ENCODE measurements at regions of chr11 and their contacts with region 1.

Region 1: GRCh38 chr11:62705880-62706849 is 1.1 kb downstream of the BSCL2 start:
- DNase-seq: peak; percentile 98
- ATAC-seq: peak; percentile 72
- H3K4me3 Mint-ChIP-seq: peak overlapping the region; percentile 82
- H3K27ac Mint-ChIP-seq: peak overlapping the region; percentile 51
- H3K4me1 Mint-ChIP-seq: peaks cover 46% of the 10 kb centered on the region
- H3K27me3 Mint-ChIP-seq: no peaks in the 10 kb centered on the region

Region 2: GRCh38 chr11:61945191-61945590 is 761.0 kb before region 1 on chr11:
- CTCF ChIA-PET with region 1: no interaction called
- POLR2A ChIA-PET with region 1: no interaction called
- intact Hi-C with region 1: no loop called
- DNase-seq: no peak
- ATAC-seq: no peak
- H3K4me3 Mint-ChIP-seq: no peak overlapping the region
- H3K27ac Mint-ChIP-seq: no peak overlapping the region
- H3K4me1 Mint-ChIP-seq: peaks cover 5% of the 10 kb centered on the region
- H3K27me3 Mint-ChIP-seq: peaks cover 2% of the 10 kb centered on the region

Region 3: DNA sequence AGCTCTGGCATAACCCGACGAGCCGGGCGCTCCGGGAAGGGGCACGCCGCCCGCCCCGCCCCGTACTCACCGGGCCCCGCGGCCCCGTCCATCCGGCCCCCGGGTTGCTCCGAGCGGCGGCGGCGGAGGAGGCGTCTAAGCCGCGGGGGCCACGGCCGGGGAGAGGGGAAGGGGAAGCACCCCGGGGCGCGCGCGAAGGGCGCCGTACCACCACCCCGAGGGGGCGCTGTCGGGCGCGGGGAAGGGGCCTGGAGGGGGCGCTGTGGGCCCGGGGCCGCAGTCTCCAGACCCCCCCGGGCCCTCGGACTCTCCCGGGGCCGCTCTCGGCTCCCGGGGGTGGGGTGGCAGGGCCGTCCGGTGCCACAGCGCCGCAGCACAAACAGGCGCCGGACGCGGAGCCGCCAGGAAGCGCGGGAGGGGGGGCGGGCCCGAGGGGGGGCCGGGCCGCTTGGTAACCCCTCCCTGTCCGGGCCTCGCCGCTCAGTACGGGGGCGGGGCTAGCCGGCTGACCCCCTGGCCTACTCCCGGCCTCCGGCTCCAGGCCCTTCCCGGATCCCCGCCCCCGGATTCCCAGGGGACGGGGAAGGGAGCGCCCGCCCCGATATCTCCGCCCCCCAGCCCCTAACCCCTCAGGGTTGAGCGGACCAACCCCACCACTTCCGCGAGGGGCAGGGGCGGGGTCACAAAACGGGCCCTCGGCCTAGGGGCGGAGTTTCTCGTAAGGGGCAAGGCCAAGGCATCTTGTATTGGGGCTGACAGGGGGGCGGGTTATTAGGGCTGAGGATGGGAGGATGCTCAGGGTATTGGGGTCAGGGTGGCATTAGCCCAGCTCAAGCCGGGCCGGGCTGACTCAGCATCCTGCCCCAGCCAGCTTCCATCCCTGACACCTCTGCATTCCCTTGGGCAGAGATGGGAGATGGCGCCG is 93.5 kb before region 1 on chr11 and contains the starts of genes EML3 and ROM1:
- CTCF ChIA-PET with region 1: no interaction called
- POLR2A ChIA-PET with region 1: no interaction called
- intact Hi-C with region 1: loop called in 1 of 2 experiments (anchors 2 kb)
- DNase-seq: peak; percentile 91
- ATAC-seq: peak; percentile 78
- H3K4me3 Mint-ChIP-seq: peak within 1 kb of the TSS; percentile 91
- H3K27ac Mint-ChIP-seq: peak within 1 kb of the TSS; percentile 90
- H3K4me1 Mint-ChIP-seq: peaks cover 37% of the 10 kb centered on the region
- H3K27me3 Mint-ChIP-seq: no peaks in the 10 kb centered on the region
- total RNA-seq, gene EML3: 101 to 112 TPM
- total RNA-seq, gene ROM1: 1.5 to 1.9 TPM

Region 4: DNA sequence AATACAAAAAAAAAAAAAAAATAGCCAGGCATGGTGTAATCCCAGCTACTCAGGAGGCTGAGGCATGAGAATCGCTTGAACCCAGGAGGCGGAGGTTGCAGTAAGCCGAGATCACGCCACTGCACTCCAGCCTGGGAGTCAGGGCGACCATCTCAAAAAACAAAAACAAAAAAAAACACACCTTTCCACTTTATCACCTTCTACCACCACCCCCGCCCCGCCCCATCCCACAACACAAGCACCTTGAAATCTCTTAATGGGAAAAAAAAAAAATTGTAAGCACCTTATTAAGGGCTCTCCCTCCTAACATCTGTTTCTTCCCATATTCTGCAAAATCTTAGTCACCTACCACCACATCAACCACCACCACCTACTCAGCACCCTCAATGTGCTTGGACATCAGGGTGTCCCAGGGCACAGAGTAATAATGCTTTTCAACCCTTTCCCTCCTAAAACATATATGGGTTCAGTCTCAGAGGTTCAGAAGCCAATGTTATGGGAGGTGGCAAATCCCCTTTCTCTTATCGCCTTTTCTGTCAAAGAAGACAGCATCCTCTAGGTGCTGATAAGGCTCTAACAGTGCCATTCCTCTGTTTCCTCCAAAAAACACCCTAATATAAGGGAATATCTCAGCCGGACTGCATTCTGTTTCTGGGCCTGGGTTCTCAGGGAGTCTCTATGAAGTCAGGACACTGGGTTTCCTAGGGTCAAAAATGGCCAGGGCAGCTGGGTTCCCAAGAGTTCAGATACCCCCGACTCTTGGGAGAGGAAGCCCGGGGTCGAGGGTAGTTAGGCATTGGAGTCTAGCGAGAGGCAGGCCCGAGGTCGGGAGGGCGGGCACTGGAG is 53.8 kb before region 1 on chr11:
- CTCF ChIA-PET with region 1: interaction called, 3 read pairs
- POLR2A ChIA-PET with region 1: no interaction called
- intact Hi-C with region 1: loop called in 1 of 2 experiments (anchors 1 kb)
- DNase-seq: no peak
- ATAC-seq: no peak
- H3K4me3 Mint-ChIP-seq: peak overlapping the region; percentile 88
- H3K27ac Mint-ChIP-seq: peak overlapping the region; percentile 91
- H3K4me1 Mint-ChIP-seq: peaks cover 23% of the 10 kb centered on the region
- H3K27me3 Mint-ChIP-seq: no peaks in the 10 kb centered on the region

Region 5: GRCh38 chr11:62678770-62679696 is 27.1 kb before region 1 on chr11 and contains the start of gene UBXN1:
- CTCF ChIA-PET with region 1: interaction called, 8 read pairs
- POLR2A ChIA-PET with region 1: interaction called, 4 read pairs
- intact Hi-C with region 1: loop called (anchors 1 to 5 kb)
- DNase-seq: peak; percentile 93
- ATAC-seq: peak; percentile 88
- H3K4me3 Mint-ChIP-seq: peak within 1 kb of the TSS; percentile 82
- H3K27ac Mint-ChIP-seq: peak within 1 kb of the TSS; percentile 92
- H3K4me1 Mint-ChIP-seq: peaks cover 28% of the 10 kb centered on the region
- H3K27me3 Mint-ChIP-seq: no peaks in the 10 kb centered on the region
- total RNA-seq, gene UBXN1: 95.6 to 119 TPM

Region 6: DNA sequence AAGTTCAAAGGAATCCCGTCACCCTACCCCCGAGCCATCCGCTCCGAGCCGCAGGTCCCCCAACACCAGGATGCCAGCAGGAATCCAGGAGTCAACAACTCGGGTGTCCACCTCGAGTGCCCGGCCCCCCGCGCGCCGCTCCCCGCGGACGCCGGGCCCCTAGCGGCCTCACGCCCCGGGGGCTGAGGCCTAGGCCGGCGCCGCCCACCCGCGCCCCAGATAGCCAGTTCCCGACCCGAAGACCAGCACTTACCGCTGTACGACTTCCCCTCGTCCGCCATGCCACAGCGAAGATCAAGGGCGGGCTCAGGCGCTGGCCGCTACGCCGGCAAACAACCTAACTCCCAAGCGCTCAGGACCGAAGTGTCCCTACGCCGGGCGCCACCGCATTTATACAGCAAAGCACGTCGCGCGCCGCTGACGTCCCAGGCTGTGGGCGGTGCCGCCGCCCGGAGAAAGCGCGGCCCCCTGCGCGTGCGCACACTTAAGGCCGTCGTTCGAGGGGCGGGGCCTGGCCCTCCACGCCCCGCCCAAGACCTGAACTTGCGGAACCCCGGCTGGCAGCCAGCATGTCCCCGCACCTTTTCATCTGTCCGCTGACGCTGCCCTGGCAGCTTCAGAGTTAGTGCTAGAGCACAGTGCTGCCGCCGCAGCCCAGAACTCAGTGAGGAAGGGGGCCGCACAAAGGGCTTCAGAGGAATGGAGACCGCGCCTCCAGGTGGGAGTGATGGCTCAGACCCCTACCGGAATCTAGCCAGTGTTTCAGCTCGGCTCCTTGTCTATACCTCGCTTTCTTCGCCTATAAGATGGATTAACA is 99.1 kb after region 1 on chr11 and contains the start of gene NXF1:
- CTCF ChIA-PET with region 1: interaction called, 4 read pairs
- POLR2A ChIA-PET with region 1: no interaction called
- intact Hi-C with region 1: loop called in 1 of 2 experiments (anchors 1 kb)
- DNase-seq: peak; percentile 97
- ATAC-seq: peak; percentile 79
- H3K4me3 Mint-ChIP-seq: peak within 1 kb of the TSS; percentile 99
- H3K27ac Mint-ChIP-seq: peak within 1 kb of the TSS; percentile 97
- H3K4me1 Mint-ChIP-seq: peaks cover 29% of the 10 kb centered on the region
- H3K27me3 Mint-ChIP-seq: no peaks in the 10 kb centered on the region
- total RNA-seq, gene NXF1: 89.5 to 97.6 TPM

Region 7: DNA sequence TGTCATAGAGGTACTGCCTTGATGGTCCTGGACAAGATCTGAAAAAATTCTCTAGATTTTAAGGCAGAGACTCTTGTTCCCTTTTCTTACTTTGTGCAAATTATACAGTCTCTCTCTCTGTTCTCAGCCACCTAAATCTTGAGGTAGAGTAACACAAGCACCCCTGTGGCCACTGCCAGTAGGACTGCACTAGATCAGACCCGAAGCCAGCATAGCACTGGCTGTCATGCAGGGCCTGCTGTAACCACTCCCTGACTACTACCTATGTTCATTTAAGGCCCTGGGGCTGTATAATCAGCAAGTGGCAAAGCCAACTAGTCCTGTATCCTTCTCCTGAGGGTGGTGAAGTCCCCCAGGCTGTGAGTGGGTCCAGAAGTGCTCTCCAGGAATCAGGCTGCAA is 449.6 kb after region 1 on chr11:
- CTCF ChIA-PET with region 1: no interaction called
- POLR2A ChIA-PET with region 1: no interaction called
- intact Hi-C with region 1: no loop called
- DNase-seq: no peak
- ATAC-seq: no peak
- H3K4me3 Mint-ChIP-seq: no peak overlapping the region
- H3K27ac Mint-ChIP-seq: no peak overlapping the region
- H3K4me1 Mint-ChIP-seq: no peaks in the 10 kb centered on the region
- H3K27me3 Mint-ChIP-seq: peaks cover 29% of the 10 kb centered on the region

Region 8: DNA sequence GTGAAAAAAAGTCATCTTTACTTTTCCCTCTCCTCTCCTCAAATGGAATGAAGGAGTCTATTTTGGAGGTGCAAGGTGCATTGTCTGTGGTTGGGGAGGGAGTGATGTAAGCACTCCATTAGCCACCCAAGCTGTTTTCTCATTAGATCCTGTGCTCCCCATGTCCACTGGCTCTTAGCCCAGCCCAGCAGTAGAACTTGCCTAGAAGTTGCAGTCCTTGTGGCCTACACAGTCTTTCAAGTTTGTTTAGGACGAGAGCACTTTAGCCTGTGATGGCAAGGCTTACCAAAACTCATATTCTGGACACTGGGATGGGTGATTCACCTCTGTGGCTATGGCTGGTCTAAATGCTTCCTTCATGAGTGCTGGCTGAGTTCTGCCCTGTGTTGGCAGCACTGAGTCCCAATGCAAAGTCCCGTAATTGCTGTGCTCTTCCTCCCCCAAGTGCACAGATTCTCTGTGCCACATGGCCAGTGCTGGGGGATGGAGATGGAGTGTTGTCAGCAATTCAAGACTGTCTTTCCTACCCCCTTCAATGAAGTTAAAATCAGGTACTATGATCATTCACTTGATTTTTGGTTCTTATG is 521.4 kb after region 1 on chr11:
- CTCF ChIA-PET with region 1: no interaction called
- POLR2A ChIA-PET with region 1: no interaction called
- intact Hi-C with region 1: no loop called
- DNase-seq: no peak
- ATAC-seq: no peak
- H3K4me3 Mint-ChIP-seq: no peak overlapping the region
- H3K27ac Mint-ChIP-seq: no peak overlapping the region
- H3K4me1 Mint-ChIP-seq: no peaks in the 10 kb centered on the region
- H3K27me3 Mint-ChIP-seq: peaks cover 16% of the 10 kb centered on the region

Measured in activated CD4-positive, alpha-beta T cell treated with anti-CD3 and anti-CD28 coated beads for 36 hours (primary cell).